GM10248 (cell line): ENCODE measurements at regions of chr17 and their contacts with region 1.

Region 1: GRCh38 chr17:50478391-50479381 is at the start of gene RSAD1:
- DNase-seq: peak; percentile 90
- CTCF ChIP-seq: peak; percentile 85

Region 2: GRCh38 chr17:50468409-50469207 is 10.1 kb before region 1 on chr17 and contains the start of gene CHAD:
- CTCF ChIA-PET with region 1: interaction called, 12 read pairs
- POLR2A ChIA-PET with region 1: no interaction called
- DNase-seq: no peak
- CTCF ChIP-seq: no peak

Region 3: DNA sequence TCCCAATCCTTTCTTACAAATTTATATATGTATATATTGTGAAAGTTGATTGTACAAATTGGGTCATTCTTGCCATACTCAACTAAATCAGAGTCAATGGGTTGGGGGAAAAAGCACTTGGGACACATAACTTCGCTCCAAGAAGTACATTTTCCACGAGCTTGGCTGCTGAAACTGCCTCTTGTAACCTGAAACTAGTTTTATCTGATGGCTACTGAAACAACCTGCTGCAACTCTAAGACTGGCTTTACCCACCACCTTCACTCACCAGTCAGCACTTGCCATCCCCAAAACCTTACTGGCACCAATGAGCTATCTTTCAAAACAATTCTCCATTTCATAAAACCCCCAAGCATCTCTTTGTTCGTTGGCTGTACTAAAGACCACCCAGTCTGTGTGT is 15.1 kb after region 1 on chr17:
- CTCF ChIA-PET with region 1: interaction called, 16 read pairs
- POLR2A ChIA-PET with region 1: no interaction called
- DNase-seq: no peak
- CTCF ChIP-seq: no peak

Region 4: GRCh38 chr17:50501054-50501453 is 22.4 kb after region 1 on chr17:
- CTCF ChIA-PET with region 1: interaction called, 35 read pairs
- POLR2A ChIA-PET with region 1: no interaction called
- DNase-seq: no peak
- CTCF ChIP-seq: no peak

Region 5: GRCh38 chr17:50541716-50542688 is 63.3 kb after region 1 on chr17:
- CTCF ChIA-PET with region 1: interaction called, 10 read pairs
- POLR2A ChIA-PET with region 1: no interaction called
- DNase-seq: peak; percentile 98
- CTCF ChIP-seq: peak; percentile 27

Region 6: GRCh38 chr17:50626037-50626574 is 147.4 kb after region 1 on chr17:
- CTCF ChIA-PET with region 1: interaction called, 70 read pairs
- POLR2A ChIA-PET with region 1: no interaction called
- DNase-seq: peak; percentile 79
- CTCF ChIP-seq: peak; percentile 73